Activated CD4-positive, alpha-beta T cell treated with anti-CD3 and anti-CD28 coated beads for 36 hours (primary cell): ENCODE measurements at regions of chr19 and their contacts with region 1.

Region 1: DNA sequence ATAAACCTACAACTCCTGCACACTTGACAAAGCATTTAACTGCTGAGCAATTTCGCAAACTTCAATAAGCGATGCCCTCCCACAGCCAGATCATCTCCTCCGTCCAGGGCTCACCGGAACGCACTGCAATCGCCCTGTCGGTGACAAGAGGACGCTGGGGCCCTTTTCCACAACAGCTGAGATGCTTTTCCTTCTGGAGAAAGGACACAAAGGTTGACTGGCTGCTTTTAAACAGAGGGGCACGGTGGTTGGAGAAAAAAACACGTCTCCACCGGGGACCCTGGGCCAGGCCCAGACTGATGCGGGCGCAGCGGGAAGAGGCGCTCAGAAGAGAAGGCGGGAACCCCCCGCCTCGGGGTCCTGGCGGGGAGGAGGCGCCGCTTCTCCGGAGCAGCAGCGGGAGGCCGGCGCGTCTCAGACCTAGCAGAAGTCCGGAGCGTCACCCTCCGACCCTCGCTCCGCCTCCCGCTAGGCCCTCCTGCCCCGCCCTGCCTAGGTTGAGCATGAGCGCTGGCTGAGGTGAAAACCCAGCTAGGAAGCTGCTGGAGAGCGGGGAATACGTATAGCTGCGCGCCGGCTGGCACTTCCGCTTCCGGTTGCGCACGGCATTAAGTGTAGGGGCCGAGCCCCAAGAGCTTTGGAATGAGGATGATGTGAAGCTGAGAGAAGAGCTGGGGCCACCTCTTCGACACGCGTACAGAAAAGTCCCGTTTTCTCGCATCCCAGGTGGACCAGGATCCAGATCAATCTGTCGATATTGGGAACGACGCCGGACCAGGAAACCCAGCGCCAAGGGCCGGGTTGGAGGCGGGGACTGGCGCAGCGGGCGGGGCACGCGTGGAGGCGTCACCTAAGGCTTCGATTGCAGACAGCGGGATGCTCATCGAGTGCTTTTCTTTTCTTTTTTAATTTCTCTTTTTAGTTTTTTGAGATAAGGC is at the start of gene ZNF846:
- DNase-seq: peak; percentile 96
- ATAC-seq: peak; percentile 98
- H3K4me3 Mint-ChIP-seq: peak within 1 kb of the TSS; percentile 84
- H3K27ac Mint-ChIP-seq: peak within 1 kb of the TSS; percentile 90
- H3K4me1 Mint-ChIP-seq: peaks cover 7% of the 10 kb centered on the region
- H3K27me3 Mint-ChIP-seq: no peaks in the 10 kb centered on the region
- total RNA-seq, gene ZNF846: 5.3 to 6.4 TPM

Region 2: GRCh38 chr19:9309139-9309973 is 459.1 kb before region 1 on chr19 and contains the start of gene ZNF699:
- CTCF ChIA-PET with region 1: no interaction called
- POLR2A ChIA-PET with region 1: no interaction called
- intact Hi-C with region 1: loop called in 1 of 2 experiments (anchors 1 kb)
- DNase-seq: peak; percentile 100
- ATAC-seq: peak; percentile 90
- H3K4me3 Mint-ChIP-seq: peak within 1 kb of the TSS; percentile 97
- H3K27ac Mint-ChIP-seq: peak within 1 kb of the TSS; percentile 97
- H3K4me1 Mint-ChIP-seq: peaks cover 13% of the 10 kb centered on the region
- H3K27me3 Mint-ChIP-seq: no peaks in the 10 kb centered on the region
- total RNA-seq, gene ZNF699: 6.7 to 7.1 TPM

Region 3: GRCh38 chr19:9435279-9436268 is 332.9 kb before region 1 on chr19 and contains the start of gene ZNF266:
- CTCF ChIA-PET with region 1: no interaction called
- POLR2A ChIA-PET with region 1: no interaction called
- intact Hi-C with region 1: loop called in 1 of 2 experiments (anchors 1 kb)
- DNase-seq: peak; percentile 97
- ATAC-seq: peak; percentile 91
- H3K4me3 Mint-ChIP-seq: peak within 1 kb of the TSS; percentile 95
- H3K27ac Mint-ChIP-seq: peak within 1 kb of the TSS; percentile 99
- H3K4me1 Mint-ChIP-seq: peaks cover 33% of the 10 kb centered on the region
- H3K27me3 Mint-ChIP-seq: no peaks in the 10 kb centered on the region
- total RNA-seq, gene ZNF266: 17.1 to 22.4 TPM

Region 4: GRCh38 chr19:9547870-9548269 is 220.6 kb before region 1 on chr19:
- CTCF ChIA-PET with region 1: no interaction called
- POLR2A ChIA-PET with region 1: no interaction called
- intact Hi-C with region 1: no loop called
- DNase-seq: no peak
- ATAC-seq: no peak
- H3K4me3 Mint-ChIP-seq: no peak overlapping the region
- H3K27ac Mint-ChIP-seq: no peak overlapping the region
- H3K4me1 Mint-ChIP-seq: no peaks in the 10 kb centered on the region
- H3K27me3 Mint-ChIP-seq: no peaks in the 10 kb centered on the region

Region 5: DNA sequence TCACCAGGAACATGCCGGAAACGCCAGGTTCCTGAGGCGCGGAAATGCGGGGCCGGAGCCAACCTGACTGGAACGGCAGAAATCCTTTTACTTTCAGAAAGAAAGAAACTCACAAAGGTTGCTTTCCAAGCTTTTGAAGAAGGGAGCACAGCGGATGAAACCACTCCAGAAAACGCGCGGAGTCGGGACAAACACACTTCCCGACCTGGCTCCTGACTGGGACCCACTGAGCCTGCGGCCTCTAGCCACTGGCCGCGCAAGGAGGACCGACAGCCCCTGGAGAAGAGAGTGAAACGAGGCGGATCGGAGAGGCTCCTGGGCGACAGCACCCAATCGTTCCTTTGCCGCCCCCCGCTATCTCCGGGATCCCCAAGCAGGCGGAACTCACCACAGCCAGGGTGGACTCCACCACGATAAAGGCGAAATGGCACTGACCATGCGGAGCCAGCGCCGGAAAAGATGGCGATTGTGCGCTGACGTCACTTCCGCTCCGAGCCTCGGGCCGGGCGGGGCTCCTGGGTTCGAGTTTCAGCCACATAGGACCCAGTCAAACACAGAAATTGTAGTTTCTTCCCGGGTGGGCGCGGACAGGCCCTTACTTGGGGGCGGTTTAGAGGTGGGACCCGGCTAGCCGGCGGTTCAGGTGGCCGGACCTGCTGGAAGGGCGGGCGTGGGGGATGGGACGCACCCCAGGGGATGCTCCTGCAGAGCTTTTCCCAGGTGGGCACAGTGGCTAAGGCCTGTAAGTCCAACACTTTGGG is 184.2 kb before region 1 on chr19 and contains the start of gene ZNF121:
- CTCF ChIA-PET with region 1: interaction called, 6 read pairs
- POLR2A ChIA-PET with region 1: no interaction called
- intact Hi-C with region 1: loop called in 1 of 2 experiments (anchors 1 kb)
- DNase-seq: peak; percentile 91
- ATAC-seq: peak; percentile 82
- H3K4me3 Mint-ChIP-seq: peak within 1 kb of the TSS; percentile 93
- H3K27ac Mint-ChIP-seq: peak within 1 kb of the TSS; percentile 94
- H3K4me1 Mint-ChIP-seq: peaks cover 29% of the 10 kb centered on the region
- H3K27me3 Mint-ChIP-seq: peaks cover 4% of the 10 kb centered on the region
- total RNA-seq, gene ZNF121: 71.4 to 75.3 TPM

Region 6: GRCh38 chr19:9785367-9786331 is 17.2 kb after region 1 on chr19:
- CTCF ChIA-PET with region 1: interaction called, 3 read pairs
- POLR2A ChIA-PET with region 1: no interaction called
- intact Hi-C with region 1: loop called (anchors 1 kb)
- DNase-seq: peak; percentile 100
- ATAC-seq: peak; percentile 89
- H3K4me3 Mint-ChIP-seq: peak overlapping the region; percentile 84
- H3K27ac Mint-ChIP-seq: peak overlapping the region; percentile 98
- H3K4me1 Mint-ChIP-seq: peaks cover 26% of the 10 kb centered on the region
- H3K27me3 Mint-ChIP-seq: no peaks in the 10 kb centered on the region

Region 7: GRCh38 chr19:9827289-9828238 is 59.1 kb after region 1 on chr19 and contains the start of gene UBL5:
- CTCF ChIA-PET with region 1: no interaction called
- POLR2A ChIA-PET with region 1: interaction called, 3 read pairs
- intact Hi-C with region 1: loop called in 1 of 2 experiments (anchors 2 kb)
- DNase-seq: peak; percentile 93
- ATAC-seq: peak; percentile 99
- H3K4me3 Mint-ChIP-seq: peak within 1 kb of the TSS; percentile 98
- H3K27ac Mint-ChIP-seq: peak within 1 kb of the TSS; percentile 97
- H3K4me1 Mint-ChIP-seq: peaks cover 23% of the 10 kb centered on the region
- H3K27me3 Mint-ChIP-seq: no peaks in the 10 kb centered on the region
- total RNA-seq, gene UBL5: 214 to 327 TPM